GM12878 (cell line): ENCODE measurements at regions of chr9 and their contacts with region 1.

Region 1: DNA sequence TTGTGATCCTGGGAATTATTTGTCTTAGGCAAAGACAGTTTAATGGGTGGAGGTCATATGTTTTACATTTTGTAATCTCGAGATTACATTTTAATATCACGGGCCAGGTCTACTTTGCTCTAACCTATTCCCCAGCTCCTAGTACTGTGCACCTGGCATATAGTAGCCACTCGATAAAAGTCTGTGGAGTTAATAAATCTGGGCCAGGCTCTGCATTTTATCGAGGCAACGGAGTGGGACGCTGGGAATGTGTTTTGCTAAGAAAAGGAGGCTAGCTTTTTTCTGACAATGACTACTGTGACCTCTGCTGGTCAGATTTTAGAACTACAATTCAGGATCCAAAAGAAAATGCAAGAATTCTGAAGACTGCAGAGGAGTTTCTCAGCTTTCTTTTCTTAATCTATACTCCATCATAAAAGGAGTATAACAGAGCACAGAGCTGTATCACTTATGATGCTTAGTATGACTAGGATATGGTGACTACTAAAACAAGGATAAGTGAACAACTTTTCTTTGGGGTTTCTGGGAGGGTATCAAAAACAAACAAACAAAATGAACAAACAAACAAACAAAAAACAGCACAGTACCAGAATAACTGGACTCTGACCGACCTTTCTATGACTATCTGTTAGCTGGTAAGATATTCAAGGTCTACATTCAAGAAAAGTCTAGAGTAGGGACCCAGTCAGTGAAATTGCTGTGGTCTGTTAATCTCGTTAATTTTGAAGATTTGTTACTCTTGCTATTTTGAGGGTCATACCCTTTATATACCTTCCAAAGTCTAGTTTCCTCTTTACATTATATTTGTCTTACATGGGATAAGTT is 46.1 kb upstream of the CER1 start:
- DNase-seq: no peak
- ATAC-seq: peak; percentile 49; the same call in 2 of the 3 replicates
- H3K4me3 ChIP-seq: no peak overlapping the region
- H3K27ac ChIP-seq: no peak overlapping the region
- H3K4me1 ChIP-seq: no peaks in the 10 kb centered on the region
- H3K27me3 ChIP-seq: no peaks in the 10 kb centered on the region
- CTCF ChIP-seq: peak; percentile 59 to 78 (median 64)
- EP300 ChIP-seq: no peak
- POLR2A ChIP-seq: no peak
- RAD21 ChIP-seq: peak; percentile 89

Region 2: GRCh38 chr9:14353222-14354056 is 415.2 kb before region 1 on chr9:
- CTCF ChIA-PET with region 1: interaction called, 3 read pairs
- POLR2A ChIA-PET with region 1: no interaction called
- RAD21 ChIA-PET with region 1: interaction called, 3 read pairs
- SMC1A ChIA-PET with region 1: no interaction called
- in situ Hi-C with region 1: no loop called
- intact Hi-C with region 1: loop called (anchors 2 kb)
- DNase-seq: no peak
- ATAC-seq: peak; percentile 96
- H3K4me3 ChIP-seq: no peak overlapping the region
- H3K27ac ChIP-seq: no peak overlapping the region
- H3K4me1 ChIP-seq: no peaks in the 10 kb centered on the region
- H3K27me3 ChIP-seq: peaks cover 14 to 16% of the 10 kb centered on the region in 2 experiments
- CTCF ChIP-seq: peak; percentile 78 to 93 (median 88)
- EP300 ChIP-seq: no peak
- POLR2A ChIP-seq: no peak
- RAD21 ChIP-seq: peak; percentile 80

Region 3: DNA sequence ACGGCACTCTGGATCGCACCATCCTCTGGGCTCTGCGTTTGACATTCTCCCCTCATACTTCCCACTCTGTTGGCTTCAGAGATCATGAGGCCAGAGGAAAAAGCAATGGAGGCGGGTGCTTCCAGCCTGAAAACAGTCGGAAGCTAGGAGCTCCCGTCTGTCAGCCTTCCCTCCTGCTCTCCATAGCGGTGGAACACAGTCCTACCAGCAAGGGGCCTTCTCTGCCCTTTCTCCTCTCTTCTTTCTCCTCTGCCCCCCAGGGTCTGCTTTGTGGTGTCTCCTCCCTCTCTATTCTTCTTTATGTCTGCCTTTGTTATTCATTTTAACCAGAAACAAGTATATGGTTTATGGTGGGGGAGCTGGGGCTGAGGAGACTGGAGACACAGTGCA is 302.2 kb before region 1 on chr9:
- CTCF ChIA-PET with region 1: interaction called, 47 read pairs
- POLR2A ChIA-PET with region 1: no interaction called
- RAD21 ChIA-PET with region 1: interaction called, 5 read pairs
- SMC1A ChIA-PET with region 1: interaction called, 25 read pairs
- in situ Hi-C with region 1: loop called (anchors 5 kb)
- intact Hi-C with region 1: loop called (anchors 1 kb)
- DNase-seq: no peak
- ATAC-seq: no peak
- H3K4me3 ChIP-seq: no peak overlapping the region
- H3K27ac ChIP-seq: no peak overlapping the region
- H3K4me1 ChIP-seq: no peaks in the 10 kb centered on the region
- H3K27me3 ChIP-seq: no peaks in the 10 kb centered on the region; a peak in 1 of 4 replicates
- CTCF ChIP-seq: no peak
- EP300 ChIP-seq: no peak
- POLR2A ChIP-seq: no peak
- RAD21 ChIP-seq: no peak

Region 4: DNA sequence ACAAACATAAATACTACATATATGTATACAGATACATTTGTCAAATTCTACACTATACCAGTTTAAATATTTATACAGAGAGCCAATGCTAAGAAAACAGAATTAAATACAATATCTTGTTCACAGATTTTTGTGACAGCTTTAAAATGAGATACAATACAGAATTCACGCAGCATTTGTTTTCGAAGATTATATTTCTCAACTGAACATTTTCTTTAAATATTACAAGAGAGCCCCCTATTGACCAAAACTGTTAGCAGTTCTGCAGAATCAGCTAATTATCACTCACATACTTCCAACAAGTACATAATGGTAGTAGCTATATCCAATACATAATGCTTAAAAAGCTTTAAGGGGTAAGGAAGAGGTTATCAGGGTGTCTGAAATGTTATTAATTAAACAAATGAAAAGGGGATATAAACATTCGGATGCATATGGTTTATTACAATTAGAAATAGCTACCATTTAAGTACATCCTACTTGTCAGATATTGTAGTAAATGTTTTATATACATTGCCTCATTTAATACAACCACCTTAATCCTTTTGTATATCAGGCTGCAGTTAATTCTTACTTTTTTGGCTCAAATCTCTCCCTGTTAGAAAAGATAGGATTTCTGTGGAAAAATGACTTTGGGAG is 107.1 kb before region 1 on chr9:
- CTCF ChIA-PET with region 1: interaction called, 7 read pairs
- POLR2A ChIA-PET with region 1: no interaction called
- RAD21 ChIA-PET with region 1: interaction called, 7 read pairs
- SMC1A ChIA-PET with region 1: interaction called, 14 read pairs
- in situ Hi-C with region 1: no loop called
- intact Hi-C with region 1: no loop called
- DNase-seq: no peak
- ATAC-seq: peak; percentile 65
- H3K4me3 ChIP-seq: no peak overlapping the region
- H3K27ac ChIP-seq: no peak overlapping the region
- H3K4me1 ChIP-seq: no peaks in the 10 kb centered on the region
- H3K27me3 ChIP-seq: no peaks in the 10 kb centered on the region
- CTCF ChIP-seq: peak; percentile 35 to 48 (median 41); a peak in 4 of 6 replicates
- EP300 ChIP-seq: no peak
- POLR2A ChIP-seq: no peak
- RAD21 ChIP-seq: peak; percentile 37; the same call in 1 of the 2 replicates

Region 5: DNA sequence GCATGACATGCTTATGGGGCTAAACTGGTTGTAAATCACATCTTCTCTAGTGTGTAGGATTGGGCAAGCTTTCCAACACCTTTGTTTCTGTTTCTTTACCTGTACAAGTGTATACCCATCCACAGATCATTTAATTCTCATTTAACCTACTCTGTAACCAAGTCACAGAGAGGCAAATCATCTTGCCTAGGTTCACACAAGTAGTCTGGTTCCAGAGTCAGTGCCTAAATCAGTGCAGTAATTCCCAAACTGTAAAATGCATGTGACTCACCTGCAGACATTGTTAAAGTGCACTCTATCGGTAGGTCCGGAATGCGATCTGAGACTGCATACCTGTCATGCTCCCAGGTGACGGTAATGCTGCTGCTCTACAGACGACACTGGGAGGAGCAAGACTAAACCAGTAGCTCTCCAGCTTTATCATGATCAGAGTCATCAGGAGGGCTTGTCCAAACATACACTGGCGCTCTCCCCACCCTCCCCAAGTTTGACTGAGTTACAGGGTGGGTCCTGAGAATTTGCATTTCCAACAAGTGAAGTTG is 249.6 kb after region 1 on chr9:
- CTCF ChIA-PET with region 1: no interaction called
- POLR2A ChIA-PET with region 1: no interaction called
- RAD21 ChIA-PET with region 1: no interaction called
- SMC1A ChIA-PET with region 1: no interaction called
- in situ Hi-C with region 1: no loop called
- intact Hi-C with region 1: no loop called
- DNase-seq: no peak
- ATAC-seq: no peak
- H3K4me3 ChIP-seq: no peak overlapping the region
- H3K27ac ChIP-seq: no peak overlapping the region
- H3K4me1 ChIP-seq: no peaks in the 10 kb centered on the region
- H3K27me3 ChIP-seq: no peaks in the 10 kb centered on the region
- CTCF ChIP-seq: no peak
- EP300 ChIP-seq: no peak
- POLR2A ChIP-seq: no peak
- RAD21 ChIP-seq: no peak